Activated CD4-positive, alpha-beta memory T cell treated with anti-CD3 and anti-CD28 coated beads for 36 hours (primary cell): ENCODE measurements at regions of chr4 and their contacts with region 1.

Region 1: DNA sequence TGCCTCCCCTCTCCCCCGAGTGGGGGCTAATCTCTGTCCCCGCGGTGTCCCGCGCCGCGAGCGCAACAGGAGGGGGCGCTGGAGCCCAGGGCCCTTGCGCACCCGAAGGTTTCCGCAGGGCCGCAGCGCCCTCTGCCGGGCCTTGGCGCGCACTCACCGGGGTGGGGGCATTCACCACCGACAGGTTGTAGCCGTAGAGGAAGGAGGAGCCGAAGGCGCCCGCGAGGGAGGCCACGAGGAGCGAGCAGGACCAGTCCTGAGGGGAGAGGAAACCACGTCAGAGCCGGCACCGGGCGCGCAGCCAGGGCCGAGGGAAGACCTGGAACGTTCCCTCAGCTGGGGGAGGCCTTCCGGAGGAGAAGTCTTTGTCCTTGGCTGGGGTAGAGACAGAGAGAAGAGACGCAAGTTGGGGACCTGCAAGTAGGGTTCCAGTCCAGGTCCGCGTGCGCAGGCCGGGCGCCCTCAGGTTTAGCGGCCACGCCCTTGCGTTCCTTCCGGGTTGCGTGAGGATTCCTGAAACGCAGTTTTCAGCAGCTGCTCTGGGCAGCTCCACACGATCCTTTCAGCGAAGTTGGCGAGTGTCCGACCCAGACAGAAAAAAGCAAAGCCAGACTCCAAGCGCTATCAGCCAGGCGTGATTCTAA is 2.4 kb downstream of the SLC2A9 start:
- DNase-seq: peak; percentile 96
- H3K4me3 Mint-ChIP-seq: peak overlapping the region; percentile 86
- H3K27ac Mint-ChIP-seq: peak overlapping the region; percentile 88
- H3K4me1 Mint-ChIP-seq: peaks cover 10% of the 10 kb centered on the region
- H3K27me3 Mint-ChIP-seq: no peaks in the 10 kb centered on the region

Region 2: GRCh38 chr4:9691238-9692065 is 327.5 kb before region 1 on chr4:
- CTCF ChIA-PET with region 1: interaction called, 19 read pairs
- POLR2A ChIA-PET with region 1: no interaction called
- intact Hi-C with region 1: loop called (anchors 1 kb)
- DNase-seq: peak; percentile 96
- H3K4me3 Mint-ChIP-seq: peak overlapping the region; percentile 80
- H3K27ac Mint-ChIP-seq: peak overlapping the region; percentile 80
- H3K4me1 Mint-ChIP-seq: peaks cover 21% of the 10 kb centered on the region
- H3K27me3 Mint-ChIP-seq: no peaks in the 10 kb centered on the region

Region 3: GRCh38 chr4:9704551-9705332 is 314.2 kb before region 1 on chr4:
- CTCF ChIA-PET with region 1: interaction called, 57 read pairs
- POLR2A ChIA-PET with region 1: no interaction called
- intact Hi-C with region 1: loop called (anchors 1 kb)
- DNase-seq: peak; percentile 27
- H3K4me3 Mint-ChIP-seq: no peak overlapping the region
- H3K27ac Mint-ChIP-seq: no peak overlapping the region
- H3K4me1 Mint-ChIP-seq: peaks cover 11% of the 10 kb centered on the region
- H3K27me3 Mint-ChIP-seq: no peaks in the 10 kb centered on the region

Region 4: DNA sequence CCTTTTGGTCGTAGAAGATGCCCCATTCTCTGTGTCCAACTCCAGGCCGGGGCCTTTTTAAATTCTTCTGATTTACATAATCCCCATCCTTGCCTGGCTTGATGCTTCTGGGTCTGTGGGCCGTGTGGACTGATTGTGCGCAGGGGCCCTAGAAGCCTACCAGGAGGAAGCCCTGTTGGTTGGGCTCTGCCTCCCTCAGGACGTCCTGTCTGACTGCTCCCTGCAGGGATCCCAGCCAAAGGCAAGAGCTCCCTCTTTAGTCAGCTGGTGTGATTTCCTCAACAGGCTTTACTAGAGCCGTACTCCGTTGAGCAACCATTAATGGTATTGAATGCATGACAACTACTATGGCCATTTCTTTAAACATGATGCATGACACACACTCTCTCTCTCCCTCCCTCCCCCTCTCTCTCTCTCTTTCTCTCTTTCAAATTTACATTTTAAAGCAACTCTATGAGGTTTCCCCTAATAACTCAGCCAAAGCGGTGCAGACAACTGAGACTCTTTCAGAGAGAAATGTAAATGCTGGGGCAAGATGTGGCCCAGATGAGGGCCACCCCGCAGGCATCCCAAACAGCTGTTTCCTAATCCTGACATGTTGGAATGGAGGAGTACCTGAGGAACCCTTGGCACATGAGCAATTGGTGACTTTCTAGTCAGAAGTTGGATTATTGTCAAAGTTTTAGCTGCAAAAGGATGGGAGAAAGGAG is 120.2 kb before region 1 on chr4:
- CTCF ChIA-PET with region 1: interaction called, 3 read pairs
- POLR2A ChIA-PET with region 1: no interaction called
- intact Hi-C with region 1: loop called (anchors 10 kb)
- DNase-seq: peak; percentile 13
- H3K4me3 Mint-ChIP-seq: no peak overlapping the region
- H3K27ac Mint-ChIP-seq: no peak overlapping the region
- H3K4me1 Mint-ChIP-seq: no peaks in the 10 kb centered on the region
- H3K27me3 Mint-ChIP-seq: peaks cover 11% of the 10 kb centered on the region

Region 5: GRCh38 chr4:9970392-9971013 is 48.4 kb before region 1 on chr4:
- CTCF ChIA-PET with region 1: no interaction called
- POLR2A ChIA-PET with region 1: no interaction called
- intact Hi-C with region 1: no loop called
- DNase-seq: no peak
- H3K4me3 Mint-ChIP-seq: no peak overlapping the region
- H3K27ac Mint-ChIP-seq: no peak overlapping the region
- H3K4me1 Mint-ChIP-seq: no peaks in the 10 kb centered on the region
- H3K27me3 Mint-ChIP-seq: no peaks in the 10 kb centered on the region

Region 6: DNA sequence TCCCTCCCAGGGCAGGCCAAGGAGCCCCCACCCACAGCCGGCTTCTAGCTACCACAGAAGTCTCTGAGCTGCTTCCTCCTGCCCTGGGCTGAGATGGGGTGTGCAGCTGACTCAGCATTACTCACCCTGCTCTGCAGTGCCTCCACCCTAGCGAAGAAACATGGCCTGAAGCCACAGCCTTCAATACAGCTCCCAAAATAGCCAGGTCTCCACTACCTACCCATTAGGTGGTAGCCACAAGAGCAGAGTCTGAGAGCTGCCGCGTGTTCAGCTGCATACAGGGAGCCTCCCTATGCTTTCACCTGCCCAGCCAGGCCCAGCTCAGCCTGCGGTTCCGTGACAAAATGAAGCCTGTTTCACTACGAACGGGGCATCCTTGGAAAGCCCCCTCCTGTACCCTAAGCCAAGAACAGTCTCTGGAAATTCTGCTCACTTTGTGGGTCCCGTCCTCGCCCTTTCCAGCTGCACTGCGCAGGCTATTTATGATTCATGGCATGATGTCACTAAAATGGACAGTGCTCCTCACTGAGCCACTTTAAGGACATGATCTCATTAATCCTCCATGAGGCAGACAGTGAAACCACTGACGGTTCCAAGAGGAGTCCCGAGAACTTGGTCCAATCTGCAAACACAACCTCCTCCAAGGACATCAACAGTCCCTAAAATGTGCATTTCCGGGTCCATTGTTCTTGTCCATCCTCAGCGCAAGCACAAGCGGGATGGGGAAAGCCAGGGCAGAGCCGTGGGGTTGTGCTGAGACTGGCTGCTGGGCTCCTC is 77.4 kb after region 1 on chr4:
- CTCF ChIA-PET with region 1: interaction called, 3 read pairs
- POLR2A ChIA-PET with region 1: no interaction called
- intact Hi-C with region 1: loop called (anchors 2 kb)
- DNase-seq: peak; percentile 91
- H3K4me3 Mint-ChIP-seq: peak overlapping the region; percentile 37
- H3K27ac Mint-ChIP-seq: peak overlapping the region; percentile 92
- H3K4me1 Mint-ChIP-seq: peaks cover 95% of the 10 kb centered on the region
- H3K27me3 Mint-ChIP-seq: no peaks in the 10 kb centered on the region

Region 7: GRCh38 chr4:10535912-10536311 is 517.0 kb after region 1 on chr4:
- CTCF ChIA-PET with region 1: no interaction called
- POLR2A ChIA-PET with region 1: no interaction called
- intact Hi-C with region 1: loop called (anchors 5 kb)
- DNase-seq: no peak
- H3K4me3 Mint-ChIP-seq: no peak overlapping the region
- H3K27ac Mint-ChIP-seq: no peak overlapping the region
- H3K4me1 Mint-ChIP-seq: no peaks in the 10 kb centered on the region
- H3K27me3 Mint-ChIP-seq: peaks cover 2% of the 10 kb centered on the region

Region 8: GRCh38 chr4:10554694-10555093 is 535.8 kb after region 1 on chr4:
- CTCF ChIA-PET with region 1: no interaction called
- POLR2A ChIA-PET with region 1: no interaction called
- intact Hi-C with region 1: loop called (anchors 5 kb)
- DNase-seq: peak; percentile 36
- H3K4me3 Mint-ChIP-seq: no peak overlapping the region
- H3K27ac Mint-ChIP-seq: no peak overlapping the region
- H3K4me1 Mint-ChIP-seq: peaks cover 2% of the 10 kb centered on the region
- H3K27me3 Mint-ChIP-seq: peaks cover 15% of the 10 kb centered on the region

Region 9: GRCh38 chr4:10925996-10926395 is 907.1 kb after region 1 on chr4:
- CTCF ChIA-PET with region 1: no interaction called
- POLR2A ChIA-PET with region 1: no interaction called
- intact Hi-C with region 1: no loop called
- DNase-seq: no peak
- H3K4me3 Mint-ChIP-seq: no peak overlapping the region
- H3K27ac Mint-ChIP-seq: no peak overlapping the region
- H3K4me1 Mint-ChIP-seq: no peaks in the 10 kb centered on the region
- H3K27me3 Mint-ChIP-seq: no peaks in the 10 kb centered on the region